ENCODE measurements at regions of chr1 and their contacts with region 1.

Region 1: GRCh38 chr1:25810341-25811299 is 9.1 kb upstream of the MTFR1L start:
- DNase-seq: no peak
- H3K4me3 ChIP-seq: no peak overlapping the region
- H3K27ac ChIP-seq: no peak overlapping the region
- H3K27me3 ChIP-seq: no peaks in the 10 kb centered on the region
- CTCF ChIP-seq: peak; percentile 90

Region 2: GRCh38 chr1:25796811-25797458 is 13.7 kb before region 1 on chr1:
- CTCF ChIA-PET with region 1: interaction called, 10 read pairs
- POLR2A ChIA-PET with region 1: interaction called, 9 read pairs
- DNase-seq: no peak
- H3K4me3 ChIP-seq: no peak overlapping the region
- H3K27ac ChIP-seq: no peak overlapping the region
- H3K27me3 ChIP-seq: no peaks in the 10 kb centered on the region
- CTCF ChIP-seq: peak; percentile 89

Measured in AG04450 (cell line).